Colonic mucosa (tissue), 4 donors: ENCODE measurements at regions of chr12 and their contacts with region 1.

Region 1: GRCh38 chr12:48936379-48936979 is 11.2 kb upstream of the FKBP11 start:
- DNase-seq: peak; percentile 85
- H3K4me3 ChIP-seq: no peak overlapping the region
- H3K27ac ChIP-seq: no peak overlapping the region
- H3K4me1 ChIP-seq: no peaks in the 10 kb centered on the region
- H3K27me3 ChIP-seq: no peaks in the 10 kb centered on the region
- CTCF ChIP-seq: peak; percentile 94

Region 2: GRCh38 chr12:48977315-48978281 is 41.1 kb after region 1 on chr12:
- intact Hi-C with region 1: loop called (anchors 5 kb)
- DNase-seq: peak; percentile 73
- H3K4me3 ChIP-seq: peak overlapping the region; percentile 27
- H3K27ac ChIP-seq: no peak overlapping the region
- H3K4me1 ChIP-seq: peaks cover 36% of the 10 kb centered on the region
- H3K27me3 ChIP-seq: peaks cover 76% of the 10 kb centered on the region
- CTCF ChIP-seq: peak; percentile 76